Activated T-helper 1 cell treated with anti-CD3 and anti-CD28 coated beads, Interleukin-12 subunit alpha, Interleukin-12 subunit beta, Interleukin-2, Interleukin-4 antibody, amounts not matched to agents 30 ng/mL and 10 ng/mL and 1 ng/mL, durations not matched to agents 14 hours and 24 hours and 36 hours (primary cell): ENCODE measurements at regions of chr3 and their contacts with region 1.

Region 1: DNA sequence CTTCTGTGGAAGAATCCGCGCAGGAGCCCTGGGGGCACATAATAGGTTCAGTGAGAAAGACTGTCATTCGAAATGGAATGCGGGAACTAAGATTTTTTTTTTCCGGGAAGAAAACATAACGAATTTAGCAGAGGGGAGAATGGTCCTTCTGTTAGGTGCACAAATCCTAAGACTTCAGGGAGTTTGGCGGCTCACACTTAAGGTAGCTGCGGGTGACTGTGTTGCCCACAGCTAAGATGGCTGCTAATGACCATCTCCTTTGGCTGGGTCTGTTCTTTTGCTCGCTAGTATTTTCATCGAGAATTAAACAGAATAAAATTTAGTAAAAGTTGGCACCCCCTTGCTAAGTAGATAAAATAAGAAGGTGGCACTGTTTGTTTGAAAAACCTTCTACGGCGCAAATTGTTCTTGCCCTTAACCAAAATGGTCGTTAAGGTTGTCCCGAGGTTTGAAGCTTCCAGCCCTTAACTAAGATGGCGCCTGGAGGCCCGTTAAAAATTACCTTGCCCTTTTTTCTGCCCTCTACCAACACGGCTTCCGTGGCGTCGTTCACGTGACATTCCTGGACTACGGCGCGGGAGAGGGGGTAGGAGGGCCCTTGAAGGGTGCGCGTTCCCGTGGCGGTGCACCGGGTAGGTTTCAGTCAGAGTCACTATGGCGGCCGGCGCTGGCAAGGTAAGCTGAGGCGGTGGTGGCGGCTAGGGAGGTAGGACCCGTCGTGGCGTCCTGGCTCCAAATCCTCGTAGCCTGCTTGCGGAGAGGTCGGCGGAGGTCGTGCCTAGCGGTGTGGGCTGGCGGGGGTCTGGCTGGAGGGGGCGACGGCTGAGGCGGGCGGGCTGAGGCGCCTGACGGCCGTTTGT is at the start of gene SLMAP:
- DNase-seq: peak; percentile 95
- H3K4me3 Mint-ChIP-seq: peak within 1 kb of the TSS; percentile 98
- H3K27ac Mint-ChIP-seq: peak within 1 kb of the TSS; percentile 97
- H3K4me1 Mint-ChIP-seq: peaks cover 39% of the 10 kb centered on the region
- H3K27me3 Mint-ChIP-seq: peaks cover 6% of the 10 kb centered on the region
- total RNA-seq, gene SLMAP: 60.3 and 64.0 TPM in 2 replicates

Region 2: DNA sequence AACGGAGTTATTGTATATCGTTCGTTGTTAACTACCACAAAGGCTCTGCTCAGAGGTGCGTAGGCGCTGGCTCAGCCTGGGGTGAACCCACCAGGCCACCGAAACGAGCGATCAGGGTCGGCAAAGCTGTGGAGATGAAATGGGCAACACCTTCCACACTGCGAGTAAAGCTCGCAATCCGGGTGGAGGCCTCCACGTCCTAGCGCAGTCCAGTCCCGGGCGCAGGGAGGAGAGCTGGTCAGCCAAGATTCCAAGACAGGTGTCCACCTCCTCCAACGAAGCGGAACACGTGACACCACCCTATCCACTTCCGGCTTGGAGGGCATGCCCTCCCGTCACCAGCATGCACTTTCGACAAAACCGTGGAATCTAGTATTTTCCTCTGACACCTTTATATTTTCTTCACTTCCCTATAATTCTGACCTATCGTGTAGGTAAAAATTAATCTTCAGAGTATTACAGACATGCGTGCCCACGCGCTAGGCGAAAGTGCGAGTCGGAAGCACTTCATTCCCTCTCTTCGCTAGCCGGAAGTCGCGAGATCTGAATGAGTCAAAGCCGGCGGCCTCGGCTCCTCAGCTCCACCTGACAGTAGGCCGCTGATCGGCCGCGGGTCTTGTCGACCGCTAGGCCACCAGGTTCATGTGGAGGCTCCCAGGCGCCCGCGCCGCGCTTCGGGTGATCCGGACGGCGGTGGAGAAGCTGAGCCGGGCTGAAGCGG is 200.0 kb before region 1 on chr3 and contains the start of gene PDE12:
- intact Hi-C with region 1: loop called (anchors 1 kb)
- DNase-seq: peak; percentile 78
- H3K4me3 Mint-ChIP-seq: peak within 1 kb of the TSS; percentile 100
- H3K27ac Mint-ChIP-seq: peak within 1 kb of the TSS; percentile 100
- H3K4me1 Mint-ChIP-seq: peaks cover 47% of the 10 kb centered on the region
- H3K27me3 Mint-ChIP-seq: no peaks in the 10 kb centered on the region
- total RNA-seq, gene PDE12: 34.7 and 34.9 TPM in 2 replicates

Region 3: DNA sequence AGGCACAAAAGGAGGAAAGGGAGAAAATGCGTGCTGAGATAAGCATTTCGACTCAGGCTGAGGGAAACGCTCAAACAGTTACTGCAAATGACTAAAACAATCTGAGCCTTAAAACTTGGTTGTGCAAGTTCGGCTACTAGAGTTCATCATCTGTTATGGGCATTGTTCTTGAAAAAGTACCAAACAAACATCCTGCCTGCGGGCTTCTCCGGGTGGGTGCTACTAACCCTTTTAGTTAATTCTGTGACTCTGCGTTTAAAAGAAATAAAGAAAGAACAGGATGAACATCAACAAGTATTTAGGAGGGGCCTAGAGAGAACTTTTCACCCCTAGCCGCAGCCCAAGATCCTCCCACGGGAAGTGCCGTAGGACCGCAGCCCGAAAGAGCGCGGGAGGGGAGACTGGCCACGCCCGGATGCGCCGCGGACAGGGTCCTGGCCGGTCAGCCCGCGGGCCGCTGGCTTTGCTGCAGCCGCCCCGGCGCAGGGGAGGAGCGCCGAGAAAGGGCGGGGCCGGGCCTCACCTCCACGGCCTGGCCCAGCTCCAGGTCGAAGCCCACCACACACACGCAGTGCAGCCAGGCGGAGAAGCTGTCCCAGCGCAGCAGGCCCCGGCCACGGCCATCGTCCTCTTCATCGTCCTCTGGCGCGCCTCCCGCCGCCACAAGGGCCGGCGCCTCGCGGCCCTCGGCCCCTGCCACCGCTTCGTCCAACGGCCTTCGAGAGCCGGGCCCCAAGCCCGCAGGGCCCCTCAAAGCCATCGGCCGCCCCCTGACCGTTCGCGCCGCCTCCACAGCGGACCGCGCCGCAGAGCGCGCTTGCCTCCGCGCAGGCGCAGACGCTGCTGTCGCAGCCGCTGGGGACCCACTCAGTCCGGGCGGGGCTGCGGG is 63.4 kb before region 1 on chr3 and contains the start of gene DENND6A:
- intact Hi-C with region 1: loop called (anchors 1 kb)
- DNase-seq: peak; percentile 94
- H3K4me3 Mint-ChIP-seq: peak within 1 kb of the TSS; percentile 91
- H3K27ac Mint-ChIP-seq: peak within 1 kb of the TSS; percentile 91
- H3K4me1 Mint-ChIP-seq: peaks cover 30% of the 10 kb centered on the region
- H3K27me3 Mint-ChIP-seq: peaks cover 3% of the 10 kb centered on the region
- total RNA-seq, gene DENND6A: 23.6 and 26.2 TPM in 2 replicates

Region 4: DNA sequence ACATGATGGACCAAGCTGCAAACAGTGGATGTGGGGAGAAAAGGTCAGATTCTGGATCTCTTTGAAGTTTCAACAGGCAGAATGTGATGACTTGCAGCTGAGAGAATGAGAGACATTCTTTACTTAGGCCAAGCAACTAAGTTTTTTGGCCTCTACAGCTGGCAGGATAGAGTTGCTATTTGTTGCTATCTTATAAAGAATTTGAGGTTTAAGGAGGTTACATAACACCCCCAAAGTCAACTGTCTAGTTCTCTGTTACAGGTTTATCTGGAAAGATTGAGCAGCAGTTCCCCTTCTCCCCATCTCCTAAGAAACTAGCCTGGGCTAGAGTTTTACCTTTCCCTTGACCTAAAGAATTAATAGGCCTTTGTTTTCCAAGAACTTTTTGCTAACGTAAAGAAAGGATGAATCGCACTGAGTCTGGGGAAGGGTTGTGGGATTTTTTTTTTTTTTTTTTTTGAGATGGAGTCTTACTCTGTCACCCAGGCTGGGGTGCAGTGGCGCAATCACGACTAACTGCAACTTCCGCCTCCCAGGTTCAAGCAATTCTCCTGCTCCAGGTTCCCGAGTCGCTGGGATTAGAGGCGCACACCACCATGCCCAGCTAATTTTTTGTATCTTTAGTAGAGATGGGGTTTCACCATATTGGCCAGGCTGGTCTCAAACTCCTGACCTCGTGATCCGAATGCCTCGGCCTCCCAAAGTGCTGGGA is 26.4 kb before region 1 on chr3:
- intact Hi-C with region 1: no loop called
- DNase-seq: no peak
- H3K4me3 Mint-ChIP-seq: no peak overlapping the region
- H3K27ac Mint-ChIP-seq: no peak overlapping the region
- H3K4me1 Mint-ChIP-seq: no peaks in the 10 kb centered on the region
- H3K27me3 Mint-ChIP-seq: no peaks in the 10 kb centered on the region

Region 5: DNA sequence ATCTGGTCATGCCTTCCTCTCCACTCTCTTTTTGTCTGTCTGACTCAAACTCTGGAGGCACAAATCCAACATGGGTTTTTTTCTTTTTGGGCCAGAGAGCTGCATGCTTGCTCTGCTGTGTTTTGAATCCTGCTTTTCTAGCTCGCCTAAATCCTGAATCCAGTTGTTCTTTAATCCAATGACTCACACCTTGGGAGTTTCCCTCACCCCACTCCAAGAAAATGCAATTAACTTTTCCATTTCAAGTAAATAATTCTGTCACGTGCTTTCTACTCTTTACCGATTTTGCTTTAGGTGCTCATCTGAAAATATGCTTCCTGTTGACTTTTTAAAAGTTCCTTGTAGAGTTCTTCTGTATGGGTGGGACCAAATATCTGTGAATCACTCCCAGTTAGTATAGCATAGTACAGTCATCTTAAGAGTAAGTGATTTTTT is 47.8 kb after region 1 on chr3:
- intact Hi-C with region 1: loop called (anchors 5 kb)
- DNase-seq: no peak
- H3K4me3 Mint-ChIP-seq: peak overlapping the region; percentile 53
- H3K27ac Mint-ChIP-seq: peak overlapping the region; percentile 69
- H3K4me1 Mint-ChIP-seq: peaks cover 44% of the 10 kb centered on the region
- H3K27me3 Mint-ChIP-seq: no peaks in the 10 kb centered on the region

Region 6: DNA sequence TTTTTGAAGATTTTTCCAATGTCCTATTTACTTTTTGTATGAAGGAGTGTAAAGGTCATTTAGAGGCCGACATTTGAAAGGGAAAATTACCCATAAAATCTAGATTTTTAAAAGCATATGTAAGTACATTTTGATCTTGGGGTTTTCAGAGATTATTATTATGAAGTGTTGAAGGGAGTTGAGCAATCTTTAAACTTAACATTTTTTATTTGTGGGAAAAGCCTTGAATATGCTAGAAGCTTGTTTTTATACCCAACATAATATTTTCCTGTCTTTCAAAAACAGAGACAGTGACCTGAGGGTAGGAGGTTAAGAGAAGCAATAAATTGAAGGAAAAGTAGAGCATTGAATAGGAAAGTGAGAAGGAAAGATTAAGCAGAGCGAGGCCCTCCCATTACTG is 85.9 kb after region 1 on chr3:
- intact Hi-C with region 1: no loop called
- DNase-seq: no peak
- H3K4me3 Mint-ChIP-seq: no peak overlapping the region
- H3K27ac Mint-ChIP-seq: no peak overlapping the region
- H3K4me1 Mint-ChIP-seq: peaks cover 6% of the 10 kb centered on the region
- H3K27me3 Mint-ChIP-seq: no peaks in the 10 kb centered on the region

Region 7: DNA sequence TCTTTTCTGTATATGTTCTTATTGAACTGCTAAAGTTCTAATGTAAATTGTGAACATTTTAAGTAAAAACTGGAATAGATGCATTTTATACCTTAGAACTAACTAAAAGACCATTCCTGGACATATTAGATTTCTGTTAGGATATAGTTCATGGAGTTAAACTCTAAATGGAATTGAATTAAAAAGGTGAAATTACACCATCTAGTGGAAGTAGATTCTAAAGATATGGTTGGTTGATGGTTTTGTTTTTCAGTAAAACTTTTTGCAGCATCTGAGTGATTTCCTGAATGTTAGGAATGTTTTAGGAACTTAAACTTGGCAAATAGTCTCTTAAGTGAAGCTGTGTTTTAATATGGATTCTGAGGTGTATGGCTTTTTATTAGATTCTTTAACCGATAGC is 97.0 kb after region 1 on chr3:
- intact Hi-C with region 1: loop called (anchors 5 kb)
- DNase-seq: no peak
- H3K4me3 Mint-ChIP-seq: no peak overlapping the region
- H3K27ac Mint-ChIP-seq: no peak overlapping the region
- H3K4me1 Mint-ChIP-seq: no peaks in the 10 kb centered on the region
- H3K27me3 Mint-ChIP-seq: no peaks in the 10 kb centered on the region

Region 8: DNA sequence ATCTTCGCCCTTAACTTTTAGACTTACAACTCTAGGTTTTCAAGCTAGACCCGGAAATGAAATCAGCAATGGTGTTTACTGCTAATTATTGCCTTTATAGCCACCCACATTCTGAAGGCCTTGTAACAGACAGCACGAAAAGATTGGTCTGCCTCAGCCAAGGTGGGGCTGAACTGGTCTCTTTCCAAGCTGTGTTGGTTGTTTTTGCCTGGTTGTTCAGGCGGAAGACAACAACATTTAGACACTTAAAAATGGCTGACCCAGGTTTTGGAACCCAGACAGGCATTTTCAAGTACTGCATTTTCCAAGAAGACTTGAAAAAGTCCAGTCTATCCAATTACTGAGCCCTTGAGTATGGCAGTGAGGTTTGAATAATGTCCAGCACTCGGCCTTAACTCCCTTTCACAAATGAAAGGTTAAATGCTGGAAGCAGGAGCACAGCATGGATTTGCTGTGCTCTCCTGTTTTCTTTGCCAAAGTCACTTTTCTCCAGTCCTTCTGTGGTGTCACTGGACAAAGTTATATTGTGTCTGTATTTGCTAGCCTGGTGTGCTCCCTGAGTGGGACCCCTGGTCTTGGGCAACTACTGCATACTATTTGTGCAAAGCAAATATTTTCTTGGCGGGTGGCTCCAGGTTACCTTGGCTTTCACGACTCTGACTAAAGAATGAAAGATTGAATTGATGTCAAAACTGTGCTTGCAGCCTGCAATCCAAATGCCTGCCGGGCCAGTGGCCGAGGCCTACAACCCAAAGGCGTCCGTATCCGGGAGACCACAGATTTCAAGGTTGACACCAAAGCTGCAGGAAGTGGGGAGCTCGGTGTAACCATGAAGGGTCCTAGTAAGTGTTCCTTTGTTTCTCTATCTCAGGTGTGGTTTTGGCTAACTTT is 345.8 kb after region 1 on chr3:
- intact Hi-C with region 1: no loop called
- DNase-seq: no peak
- H3K4me3 Mint-ChIP-seq: no peak overlapping the region
- H3K27ac Mint-ChIP-seq: no peak overlapping the region
- H3K4me1 Mint-ChIP-seq: no peaks in the 10 kb centered on the region
- H3K27me3 Mint-ChIP-seq: no peaks in the 10 kb centered on the region